Caco-2 (cell line): ENCODE measurements at regions of chr16 and their contacts with region 1.

Region 1: DNA sequence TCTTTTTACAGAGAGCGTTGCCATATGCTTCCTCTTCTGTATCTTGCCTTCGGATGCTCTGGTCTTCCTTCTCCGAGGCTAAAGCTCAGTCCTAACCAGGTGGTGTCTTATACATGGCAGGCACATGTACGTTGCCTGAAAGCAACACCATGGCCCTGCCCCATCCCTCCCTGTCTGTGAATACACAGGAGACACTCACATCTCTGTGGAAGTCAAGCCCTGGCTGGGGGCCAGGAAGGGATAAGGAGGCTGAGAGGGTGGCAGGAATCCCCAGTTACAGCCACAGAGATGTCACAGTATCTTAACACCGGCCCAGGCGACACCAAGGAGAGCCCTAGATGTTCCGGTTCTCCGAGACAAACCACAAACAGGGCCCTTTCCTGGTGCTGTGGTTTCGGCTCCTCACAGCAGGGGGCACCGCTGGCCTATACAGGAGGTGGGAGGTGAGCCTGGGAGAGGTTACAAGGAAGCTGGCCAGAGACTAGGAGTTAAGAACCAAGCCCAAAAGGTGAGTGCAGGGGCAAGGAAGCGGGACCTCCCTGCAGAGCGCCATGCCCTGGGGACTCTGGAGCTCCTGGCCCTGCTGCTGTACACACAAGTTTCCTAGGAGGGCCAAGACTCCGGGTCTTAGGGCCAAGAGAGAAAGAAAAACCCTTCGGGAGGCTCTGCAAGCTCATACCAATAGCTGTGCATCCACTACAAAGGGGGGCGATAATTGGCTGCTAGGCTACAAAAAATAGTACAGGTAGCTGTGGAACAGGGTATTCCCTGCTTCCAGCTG is 41.7 kb downstream of the SRL start:
- DNase-seq: peak; percentile 73 to 78
- H3K4me3 ChIP-seq: no peak overlapping the region
- H3K4me3 Mint-ChIP-seq: no peak overlapping the region
- H3K27ac Mint-ChIP-seq: peak overlapping the region; percentile 25
- H3K4me1 ChIP-seq: no peaks in the 10 kb centered on the region
- H3K4me1 Mint-ChIP-seq: no peaks in the 10 kb centered on the region
- H3K27me3 ChIP-seq: no peaks in the 10 kb centered on the region
- H3K27me3 Mint-ChIP-seq: no peaks in the 10 kb centered on the region
- CTCF ChIP-seq: peak; percentile 64 to 88

Region 2: DNA sequence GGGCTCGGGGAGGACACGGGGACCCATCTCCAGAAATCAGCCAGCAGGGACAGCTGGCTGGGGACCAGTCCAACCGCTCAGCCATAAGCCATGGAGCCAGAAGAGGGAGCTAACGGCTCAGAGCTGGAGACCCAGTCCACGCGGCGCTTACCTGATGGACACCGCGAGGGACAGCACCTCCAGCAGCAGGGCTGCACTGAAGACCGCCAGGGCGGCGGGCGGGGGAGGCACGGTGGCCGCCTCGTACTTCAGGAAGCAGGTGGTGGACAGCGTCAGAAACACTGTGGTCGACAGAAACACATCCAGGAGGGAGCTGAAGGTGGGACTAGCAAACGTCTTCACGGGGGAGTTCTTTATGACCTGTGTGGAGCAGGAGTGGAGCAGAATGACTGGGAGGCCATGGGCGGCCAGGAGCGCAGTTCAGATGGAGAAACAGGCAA is 217.1 kb before region 1 on chr16:
- CTCF ChIA-PET with region 1: interaction called, 10 read pairs
- POLR2A ChIA-PET with region 1: no interaction called
- intact Hi-C with region 1: no loop called
- DNase-seq: peak; percentile 70 to 78
- H3K4me3 ChIP-seq: no peak overlapping the region
- H3K4me3 Mint-ChIP-seq: no peak overlapping the region
- H3K27ac Mint-ChIP-seq: no peak overlapping the region
- H3K4me1 ChIP-seq: peaks cover 5% of the 10 kb centered on the region; the same call in 1 of the 2 replicates
- H3K4me1 Mint-ChIP-seq: no peaks in the 10 kb centered on the region
- H3K27me3 ChIP-seq: no peaks in the 10 kb centered on the region
- H3K27me3 Mint-ChIP-seq: no peaks in the 10 kb centered on the region
- CTCF ChIP-seq: peak; percentile 58 to 78

Region 3: DNA sequence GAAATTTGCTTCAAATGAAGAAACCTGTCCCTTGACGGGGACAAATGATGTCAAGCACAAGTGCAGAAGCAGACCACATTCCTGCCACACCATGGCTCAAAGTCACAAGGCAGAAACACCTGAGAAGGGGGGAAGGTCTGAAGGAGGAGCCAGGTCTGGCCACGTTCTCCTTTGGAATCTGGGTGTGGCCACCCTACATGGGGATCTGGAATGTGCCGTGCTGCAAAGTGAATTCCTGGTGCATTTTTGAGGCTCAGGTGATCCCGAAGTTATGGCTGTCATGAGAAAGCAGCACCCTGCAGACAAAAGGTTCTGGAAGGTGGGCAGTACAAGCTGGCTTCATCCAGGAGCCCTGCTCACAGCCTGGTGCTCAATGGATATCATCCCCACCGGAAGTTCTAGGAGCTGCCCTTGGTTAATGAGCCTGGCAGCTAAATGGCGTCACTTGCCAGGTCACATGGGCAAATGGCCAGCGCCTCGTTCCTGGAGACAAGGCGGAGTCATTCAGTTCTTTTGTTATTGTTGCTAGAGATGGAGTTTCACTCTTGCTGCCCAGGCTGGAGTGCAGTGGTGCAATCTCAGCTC is 63.9 kb before region 1 on chr16:
- CTCF ChIA-PET with region 1: no interaction called
- POLR2A ChIA-PET with region 1: no interaction called
- intact Hi-C with region 1: no loop called
- DNase-seq: peak; percentile 84 to 92
- H3K4me3 ChIP-seq: no peak overlapping the region
- H3K4me3 Mint-ChIP-seq: peak overlapping the region; percentile 52
- H3K27ac Mint-ChIP-seq: peak overlapping the region; percentile 95
- H3K4me1 ChIP-seq: peaks cover 18% of the 10 kb centered on the region
- H3K4me1 Mint-ChIP-seq: peaks cover 9% of the 10 kb centered on the region
- H3K27me3 ChIP-seq: no peaks in the 10 kb centered on the region
- H3K27me3 Mint-ChIP-seq: no peaks in the 10 kb centered on the region
- CTCF ChIP-seq: peak in 1 of 2 experiments; percentile 41